Dorsolateral prefrontal cortex (tissue), 120 donors: ENCODE measurements at regions of chr2 and their contacts with region 1.

Region 1: DNA sequence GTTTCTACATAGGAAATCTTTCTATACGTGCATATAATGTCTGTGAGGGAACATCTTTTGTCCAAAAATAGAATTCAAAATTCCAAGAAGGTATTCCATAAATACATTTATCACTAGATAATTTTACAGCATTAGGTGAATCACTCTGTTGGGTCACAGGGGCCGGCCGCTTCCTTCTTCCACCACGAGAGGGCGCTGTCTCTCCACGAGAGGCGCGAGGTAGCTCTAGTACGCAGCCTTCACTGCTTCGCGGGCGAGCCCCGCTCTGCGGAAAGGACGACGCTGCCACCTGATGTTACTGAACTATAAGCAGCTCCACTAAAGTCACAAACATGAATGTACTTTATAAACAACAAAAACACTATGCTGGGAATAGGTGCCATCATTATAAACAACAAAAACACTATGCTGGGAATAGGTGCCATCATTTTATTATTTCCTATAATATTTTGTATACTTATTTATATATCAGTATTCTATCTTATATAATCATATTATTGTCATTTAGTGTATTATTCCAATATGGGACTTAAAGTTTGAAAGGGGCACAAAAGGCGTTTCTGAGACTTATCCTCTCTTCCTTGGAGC is 69.4 kb upstream of the REV1 start:
- DNase-seq: peak; percentile 78 to 93 (median 90)
- H3K4me3 ChIP-seq: no peak overlapping the region
- H3K27ac ChIP-seq: no peak overlapping the region
- H3K27me3 ChIP-seq: no peaks in the 10 kb centered on the region
- CTCF ChIP-seq: peak; percentile 93 to 100 (median 99)

Region 2: DNA sequence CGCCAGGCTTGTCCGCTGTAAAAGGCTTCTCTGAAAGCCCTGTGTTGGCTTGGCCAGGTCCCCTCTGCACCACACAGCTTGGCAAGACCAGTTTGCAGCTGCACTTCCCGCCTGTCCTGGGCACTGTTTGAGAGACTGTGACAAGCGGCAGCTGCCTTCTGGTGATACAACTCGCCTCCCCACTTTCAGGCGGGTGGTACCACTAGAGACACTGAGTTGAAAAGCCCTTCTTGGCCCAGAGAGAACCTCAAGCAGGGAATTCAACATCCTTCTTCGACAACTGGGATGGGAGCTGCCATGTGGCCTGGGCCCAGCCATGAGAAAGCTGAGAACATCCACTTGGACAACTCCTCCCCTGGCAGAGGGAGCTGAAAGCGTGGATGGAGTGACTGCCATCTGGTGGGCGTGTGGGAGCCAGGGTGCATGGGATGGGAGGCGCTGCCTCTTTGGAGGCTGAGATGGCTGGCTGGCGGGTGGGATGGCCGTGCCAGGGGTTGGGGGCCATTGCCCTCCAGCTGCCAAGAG is 56.1 kb after region 1 on chr2:
- intact Hi-C with region 1: loop called in 1 of 2 experiments (anchors 5 kb)
- DNase-seq: peak in 8 of 10 donors; percentile 31 to 72 (median 64)
- H3K4me3 ChIP-seq: peak overlapping the region in 1 of 59 donors; percentile 10
- H3K27ac ChIP-seq: peak overlapping the region in 29 of 59 donors; percentile 6 to 68 (median 34)
- H3K27me3 ChIP-seq: no peaks in the 10 kb centered on the region
- CTCF ChIP-seq: peak in 52 of 56 donors; percentile 16 to 73 (median 41)

Region 3: GRCh38 chr2:100262555-100263320 is 703.6 kb after region 1 on chr2:
- intact Hi-C with region 1: loop called (anchors 2 to 5 kb)
- DNase-seq: peak; percentile 65 to 89 (median 81)
- H3K4me3 ChIP-seq: peak overlapping the region in 3 of 59 donors; percentile 7 to 38 (median 28)
- H3K27ac ChIP-seq: peak overlapping the region in 7 of 59 donors; percentile 30 to 60 (median 40)
- H3K27me3 ChIP-seq: no peaks in the 10 kb centered on the region
- CTCF ChIP-seq: peak; percentile 87 to 99 (median 98)